Naive thymus-derived CD8-positive, alpha-beta T cell (primary cell): ENCODE measurements at regions of chr10 and their contacts with region 1.

Region 1: DNA sequence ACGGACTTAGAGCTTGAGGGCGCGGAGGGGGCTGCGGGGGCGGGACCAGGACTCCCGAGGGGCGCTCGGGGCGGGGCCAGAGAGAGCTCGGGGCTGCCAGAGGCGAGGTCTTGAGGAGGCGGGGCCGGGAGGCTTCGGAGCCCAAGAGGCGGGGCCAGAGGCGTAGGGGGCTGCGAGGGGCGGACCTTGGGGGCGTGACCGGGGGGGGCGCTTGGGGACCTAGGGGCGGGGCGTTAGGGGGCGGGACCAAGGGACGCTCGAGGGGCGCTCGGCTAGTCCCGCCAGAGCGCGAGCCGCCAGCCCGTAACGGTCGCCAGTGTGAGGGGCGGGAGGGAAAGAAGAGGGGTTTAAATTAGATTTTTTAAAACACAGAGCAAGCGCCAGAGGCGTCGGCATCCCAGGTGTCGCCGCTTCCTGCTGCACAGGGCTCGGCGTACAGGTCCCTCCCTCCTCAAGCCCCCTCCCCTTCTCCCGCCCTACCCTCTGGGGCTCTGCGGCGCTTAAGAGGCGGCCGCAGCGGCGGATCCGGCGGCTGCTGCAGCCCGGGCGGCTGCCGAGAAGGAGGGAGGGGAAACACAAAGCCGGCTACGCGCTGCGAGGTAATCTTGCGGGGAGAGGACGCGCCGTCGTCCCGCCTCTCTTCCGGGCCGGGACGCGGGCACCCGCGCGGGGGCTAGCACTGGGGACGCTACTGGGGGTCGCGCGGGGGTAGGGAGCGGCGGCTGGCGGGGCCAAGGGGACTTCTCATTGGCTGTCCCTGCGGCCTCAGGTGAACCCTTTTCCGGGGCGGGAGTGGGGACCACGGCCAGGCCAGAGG is at the start of gene ADD3:
- DNase-seq: peak; percentile 89 to 99 (median 94)
- ATAC-seq: peak; percentile 63 to 68
- H3K4me3 Mint-ChIP-seq: peak within 1 kb of the TSS in 1 of 10 donors; percentile 100
- H3K27ac Mint-ChIP-seq: peak within 1 kb of the TSS in 8 of 10 donors; percentile 55 to 99 (median 96)
- H3K4me1 Mint-ChIP-seq: peaks cover 19 to 58% (median 42%) of the 10 kb centered on the region in 4 donors
- H3K27me3 Mint-ChIP-seq: no peaks in the 10 kb centered on the region
- polyA plus RNA-seq, gene ADD3: 356 to 405 (median 359) TPM

Region 2: DNA sequence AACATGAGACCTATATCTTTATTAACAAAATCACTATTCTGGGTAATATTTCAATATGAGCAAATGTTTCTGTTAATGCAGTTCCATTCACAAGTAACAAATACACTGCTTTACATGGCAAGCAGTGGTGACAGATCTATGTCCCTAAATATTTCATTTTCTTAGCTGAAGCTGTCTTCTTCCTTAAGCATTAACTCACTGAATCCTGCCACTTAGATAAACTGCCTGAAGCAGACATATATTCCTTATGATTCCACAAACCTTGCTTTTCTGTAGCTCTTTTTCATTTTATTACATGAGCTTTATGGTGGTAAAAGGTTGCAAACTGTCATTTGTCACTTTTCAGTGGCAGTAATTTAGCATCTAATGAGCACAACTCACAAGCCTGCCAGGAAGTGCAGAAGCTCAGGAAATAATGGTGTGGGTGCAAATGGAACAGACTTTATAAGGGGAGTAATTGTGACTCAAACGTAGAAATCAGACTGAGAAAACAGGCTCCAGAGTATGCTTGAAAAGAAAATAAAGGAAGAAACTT is 301.8 kb before region 1 on chr10:
- POLR2A ChIA-PET with region 1: no interaction called
- DNase-seq: no peak
- ATAC-seq: no peak
- H3K4me3 Mint-ChIP-seq: no peak overlapping the region
- H3K27ac Mint-ChIP-seq: no peak overlapping the region
- H3K4me1 Mint-ChIP-seq: no peaks in the 10 kb centered on the region
- H3K27me3 Mint-ChIP-seq: peaks cover 0 to 12% (median 1%) of the 10 kb centered on the region in 5 donors

Region 3: GRCh38 chr10:109934958-109935706 is 72.8 kb before region 1 on chr10:
- POLR2A ChIA-PET with region 1: interaction called, 16 read pairs
- DNase-seq: peak in 2 of 10 donors; percentile 40 to 48
- ATAC-seq: peak; percentile 36 to 51
- H3K4me3 Mint-ChIP-seq: peak overlapping the region; percentile 65 to 92 (median 83)
- H3K27ac Mint-ChIP-seq: peak overlapping the region; percentile 89 to 98 (median 96)
- H3K4me1 Mint-ChIP-seq: peaks cover 45 to 79% (median 72%) of the 10 kb centered on the region in 4 donors
- H3K27me3 Mint-ChIP-seq: no peaks in the 10 kb centered on the region

Region 4: DNA sequence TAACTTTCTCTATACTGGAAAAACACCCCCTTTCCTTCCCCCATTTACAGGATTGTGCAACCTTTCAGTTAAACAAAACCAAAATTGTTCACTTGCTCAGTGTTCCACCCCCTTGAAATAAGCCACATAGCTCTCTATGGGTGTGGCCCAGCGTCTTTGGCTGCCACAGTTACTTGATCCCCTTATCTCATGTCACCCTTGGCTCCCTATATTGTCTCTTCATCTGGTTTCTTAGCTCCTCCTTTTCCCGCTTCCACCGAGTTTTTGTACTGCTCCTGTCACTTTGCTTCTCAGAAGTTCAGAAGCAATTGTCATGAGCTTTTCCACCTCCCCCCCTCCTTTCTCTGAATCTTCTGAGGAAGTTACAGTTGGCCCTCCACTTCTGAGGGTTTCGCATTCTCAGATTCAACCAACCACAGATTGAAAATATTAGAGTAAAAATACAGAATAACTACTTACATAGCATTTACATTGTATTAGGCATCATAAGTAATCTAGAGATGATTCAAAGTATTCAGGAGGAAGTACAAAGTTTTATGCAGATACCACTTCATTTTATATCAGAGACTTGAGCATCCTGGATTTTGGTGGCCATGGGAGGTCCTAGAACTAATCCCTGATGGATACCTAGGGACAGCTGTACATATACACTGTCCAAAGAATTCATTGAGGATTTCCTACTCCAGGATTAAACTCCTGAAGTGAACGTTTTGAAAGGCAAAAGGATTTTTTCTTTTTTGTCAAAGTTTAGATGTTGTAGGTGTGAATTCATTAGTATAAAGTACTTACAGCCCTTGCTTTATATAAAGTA is 60.3 kb after region 1 on chr10:
- POLR2A ChIA-PET with region 1: interaction called, 87 read pairs
- DNase-seq: peak in 6 of 10 donors; percentile 14 to 49 (median 28)
- ATAC-seq: peak; percentile 82 to 84
- H3K4me3 Mint-ChIP-seq: peak overlapping the region; percentile 17 to 83 (median 78)
- H3K27ac Mint-ChIP-seq: peak overlapping the region; percentile 84 to 98 (median 90)
- H3K4me1 Mint-ChIP-seq: peaks cover 35 to 95% (median 86%) of the 10 kb centered on the region in 4 donors
- H3K27me3 Mint-ChIP-seq: no peaks in the 10 kb centered on the region

Region 5: GRCh38 chr10:110076559-110077318 is 68.8 kb after region 1 on chr10:
- POLR2A ChIA-PET with region 1: interaction called, 87 read pairs
- DNase-seq: peak in 5 of 10 donors; percentile 28 to 68 (median 51)
- ATAC-seq: peak; percentile 68 to 80
- H3K4me3 Mint-ChIP-seq: peak overlapping the region; percentile 71 to 90 (median 84)
- H3K27ac Mint-ChIP-seq: peak overlapping the region; percentile 79 to 98 (median 91)
- H3K4me1 Mint-ChIP-seq: peaks cover 46 to 95% (median 89%) of the 10 kb centered on the region in 4 donors
- H3K27me3 Mint-ChIP-seq: no peaks in the 10 kb centered on the region

Region 6: DNA sequence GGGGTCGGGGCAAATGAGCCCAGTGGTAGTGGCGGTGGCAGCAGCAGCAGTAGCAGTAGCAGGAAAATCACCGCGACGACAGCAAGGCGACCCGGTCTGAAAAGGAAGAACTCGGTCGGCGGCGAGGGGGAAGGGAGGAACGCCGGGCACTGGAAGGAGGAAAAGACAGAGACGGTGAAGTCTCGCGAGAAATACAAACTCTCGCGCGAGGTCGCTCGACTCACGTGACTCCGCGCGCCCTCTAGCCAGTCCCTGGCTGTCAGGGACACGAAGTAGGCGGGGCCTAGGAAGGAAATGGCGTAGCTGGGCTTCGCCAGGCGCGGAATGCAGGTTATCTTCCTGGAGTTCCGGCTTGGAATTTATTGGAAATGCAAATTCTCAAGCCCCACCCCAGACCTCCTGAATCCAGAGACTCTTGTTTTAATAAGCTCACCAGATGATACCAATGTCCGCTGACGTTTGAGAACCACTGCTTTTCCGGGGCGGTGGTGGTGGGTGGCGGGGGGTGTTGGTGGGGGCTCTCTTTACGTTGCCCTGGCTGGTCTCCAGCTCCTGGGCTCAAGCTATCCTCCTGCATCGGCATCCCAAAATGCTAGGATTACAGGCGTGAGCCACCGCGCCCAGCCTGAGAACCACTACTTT is 297.0 kb after region 1 on chr10 and contains the start of gene SMNDC1:
- POLR2A ChIA-PET with region 1: interaction called, 12 read pairs
- DNase-seq: peak; percentile 93 to 98 (median 97)
- ATAC-seq: peak; percentile 89 to 91
- H3K4me3 Mint-ChIP-seq: peak within 1 kb of the TSS; percentile 90 to 99 (median 96)
- H3K27ac Mint-ChIP-seq: peak within 1 kb of the TSS; percentile 97 to 100 (median 99)
- H3K4me1 Mint-ChIP-seq: peaks cover 18 to 59% (median 44%) of the 10 kb centered on the region in 4 donors
- H3K27me3 Mint-ChIP-seq: no peaks in the 10 kb centered on the region
- polyA plus RNA-seq, gene SMNDC1: 13.0 to 14.5 (median 13.0) TPM